A549 (cell line): ENCODE measurements at regions of chr19 and their contacts with region 1.

Region 1: GRCh38 chr19:46265217-46265828 is 31.5 kb upstream of the HIF3A start:
- DNase-seq: peak; percentile 86 to 91
- ATAC-seq: peak; percentile 89 to 95
- H3K4me3 ChIP-seq: no peak overlapping the region
- H3K27ac ChIP-seq: peak overlapping the region; percentile 14 to 70; a peak in 5 of 6 replicates
- H3K4me1 ChIP-seq: peaks cover 19% of the 10 kb centered on the region
- CTCF ChIP-seq: peak; percentile 99
- EP300 ChIP-seq: no peak
- POLR2A ChIP-seq: no peak
- RAD21 ChIP-seq: peak; percentile 99

Region 2: DNA sequence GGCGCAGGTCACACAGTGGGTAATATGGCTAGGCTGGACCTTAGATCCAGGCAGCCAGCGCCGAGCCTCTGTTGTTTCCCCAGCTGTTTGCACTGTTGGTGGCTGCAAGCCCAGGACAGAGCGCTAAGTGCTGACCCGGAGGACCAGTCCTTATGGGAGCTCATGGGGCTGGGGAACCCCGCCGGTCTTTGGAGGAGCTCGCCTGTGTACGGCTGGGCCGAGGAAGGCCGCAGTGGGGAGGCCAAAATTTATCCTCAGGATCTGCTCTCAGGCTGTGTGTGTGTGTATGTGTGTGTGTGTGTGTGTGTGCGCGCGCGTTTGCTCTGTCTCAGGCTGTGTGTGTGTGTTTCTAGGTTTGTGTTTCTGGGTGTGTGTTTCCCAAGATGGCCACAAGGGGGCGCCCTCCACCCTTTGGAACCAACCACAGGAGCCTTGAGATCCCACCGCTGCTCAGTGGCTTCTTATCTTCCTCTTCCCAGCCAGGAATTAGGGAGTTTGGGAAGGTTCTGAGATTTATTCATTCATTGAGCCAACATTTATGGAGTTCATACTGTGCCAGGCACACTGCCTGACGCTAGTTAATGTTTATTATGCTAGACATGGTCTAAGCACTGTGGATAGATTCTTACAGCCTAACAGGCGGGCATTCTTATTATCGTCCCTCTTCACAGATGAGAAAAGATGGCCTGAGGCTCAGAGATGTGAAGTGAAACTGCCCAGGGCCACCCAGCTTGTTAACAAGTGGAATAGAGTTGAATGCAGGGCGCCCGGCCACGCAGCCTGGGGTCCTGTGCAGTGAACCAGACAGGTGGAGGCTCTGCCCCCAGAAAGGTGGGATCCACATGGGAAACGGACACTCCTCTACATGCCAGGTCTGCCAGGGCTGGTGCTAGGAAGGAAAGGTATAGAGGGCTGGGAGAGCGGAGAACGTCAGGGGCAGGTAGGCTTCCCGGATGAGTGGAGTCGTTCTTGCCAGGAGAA is 255.5 kb before region 1 on chr19:
- CTCF ChIA-PET with region 1: interaction called, 14 read pairs
- POLR2A ChIA-PET with region 1: no interaction called
- DNase-seq: peak; percentile 81
- ATAC-seq: peak; percentile 90 to 96
- H3K4me3 ChIP-seq: no peak overlapping the region
- H3K27ac ChIP-seq: no peak overlapping the region
- H3K4me1 ChIP-seq: peaks cover 7% of the 10 kb centered on the region; the same call in 1 of the 3 replicates
- CTCF ChIP-seq: peak; percentile 95
- EP300 ChIP-seq: no peak
- POLR2A ChIP-seq: no peak
- RAD21 ChIP-seq: peak; percentile 61 to 68

Region 3: DNA sequence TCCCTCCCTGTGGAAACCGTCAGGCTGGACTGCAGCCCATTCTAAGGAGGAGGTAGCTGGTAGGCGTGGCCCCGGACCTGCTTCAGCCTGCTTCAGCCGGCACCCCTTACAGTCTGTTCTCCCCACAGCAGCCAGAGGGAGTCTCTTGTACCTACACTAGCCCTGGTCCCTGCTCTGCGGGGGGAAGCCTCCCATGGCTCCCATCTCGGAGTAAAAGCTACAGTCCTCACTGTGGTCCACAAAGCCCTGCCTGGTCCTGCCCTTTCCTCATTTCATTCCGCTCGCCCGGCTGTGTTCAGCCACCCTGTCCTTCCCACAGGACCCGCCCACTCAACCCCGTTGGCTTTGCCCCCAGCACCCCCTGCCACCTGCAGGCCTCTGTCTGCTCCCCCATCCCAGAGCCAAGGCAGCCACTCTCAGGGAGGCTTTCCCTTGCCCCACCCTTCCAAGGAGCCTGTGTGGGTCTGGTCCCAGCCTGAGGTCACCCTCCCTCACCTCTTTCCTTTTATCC is 243.7 kb before region 1 on chr19:
- CTCF ChIA-PET with region 1: interaction called, 227 read pairs
- POLR2A ChIA-PET with region 1: no interaction called
- DNase-seq: peak in 1 of 2 experiments; percentile 34
- ATAC-seq: peak; percentile 11 to 28; a peak in 3 of 6 replicates
- H3K4me3 ChIP-seq: no peak overlapping the region
- H3K27ac ChIP-seq: no peak overlapping the region
- H3K4me1 ChIP-seq: peaks cover 4% of the 10 kb centered on the region; the same call in 2 of the 3 replicates
- CTCF ChIP-seq: no peak
- EP300 ChIP-seq: no peak
- POLR2A ChIP-seq: no peak
- RAD21 ChIP-seq: no peak

Region 4: GRCh38 chr19:46040952-46041500 is 224.3 kb before region 1 on chr19 and contains the start of gene IGFL4:
- CTCF ChIA-PET with region 1: interaction called, 44 read pairs
- POLR2A ChIA-PET with region 1: no interaction called
- DNase-seq: peak in 1 of 2 experiments; percentile 41
- ATAC-seq: peak; percentile 45 to 53; a peak in 4 of 6 replicates
- H3K4me3 ChIP-seq: no peak within 1 kb of the TSS
- H3K27ac ChIP-seq: peak within 1 kb of the TSS in 1 of 2 experiments; percentile 48; a peak in 3 of 6 replicates
- H3K4me1 ChIP-seq: peaks cover 14% of the 10 kb centered on the region
- CTCF ChIP-seq: no peak
- EP300 ChIP-seq: peak in 1 of 2 experiments; percentile 35; a peak in 1 of 5 replicates
- POLR2A ChIP-seq: no peak
- RAD21 ChIP-seq: no peak
- polyA plus RNA-seq, gene IGFL4: 1.7 and 2.4 TPM in 2 replicates

Region 5: GRCh38 chr19:46201413-46202310 is 63.7 kb before region 1 on chr19:
- CTCF ChIA-PET with region 1: interaction called, 13 read pairs
- POLR2A ChIA-PET with region 1: no interaction called
- DNase-seq: peak in 1 of 2 experiments; percentile 38
- ATAC-seq: 0 out of 6 replicates have a peak, but pooled peaks of 1 of the 2 experiments have one; percentile 6
- H3K4me3 ChIP-seq: peak overlapping the region; percentile 36
- H3K27ac ChIP-seq: peak overlapping the region; percentile 83 to 90
- H3K4me1 ChIP-seq: peaks cover 89% of the 10 kb centered on the region
- CTCF ChIP-seq: no peak
- EP300 ChIP-seq: no peak
- POLR2A ChIP-seq: no peak
- RAD21 ChIP-seq: no peak

Region 6: GRCh38 chr19:46218160-46218559 is 47.2 kb before region 1 on chr19:
- CTCF ChIA-PET with region 1: interaction called, 80 read pairs
- POLR2A ChIA-PET with region 1: no interaction called
- DNase-seq: peak in 1 of 2 experiments; percentile 56
- ATAC-seq: no peak
- H3K4me3 ChIP-seq: no peak overlapping the region
- H3K27ac ChIP-seq: no peak overlapping the region
- H3K4me1 ChIP-seq: peaks cover 38% of the 10 kb centered on the region
- CTCF ChIP-seq: no peak
- EP300 ChIP-seq: no peak
- POLR2A ChIP-seq: no peak
- RAD21 ChIP-seq: no peak

Region 7: GRCh38 chr19:46328079-46328478 is 62.8 kb after region 1 on chr19:
- CTCF ChIA-PET with region 1: no interaction called
- POLR2A ChIA-PET with region 1: no interaction called
- DNase-seq: no peak
- ATAC-seq: 0 out of 6 replicates have a peak, but pooled peaks of 1 of the 2 experiments have one; percentile 30
- H3K4me3 ChIP-seq: no peak overlapping the region
- H3K27ac ChIP-seq: no peak overlapping the region
- H3K4me1 ChIP-seq: no peaks in the 10 kb centered on the region
- CTCF ChIP-seq: no peak
- EP300 ChIP-seq: no peak
- POLR2A ChIP-seq: no peak
- RAD21 ChIP-seq: no peak

Region 8: GRCh38 chr19:46357846-46358583 is 92.7 kb after region 1 on chr19:
- CTCF ChIA-PET with region 1: no interaction called
- POLR2A ChIA-PET with region 1: no interaction called
- DNase-seq: no peak
- ATAC-seq: no peak
- H3K4me3 ChIP-seq: no peak overlapping the region
- H3K27ac ChIP-seq: no peak overlapping the region
- H3K4me1 ChIP-seq: peaks cover 30% of the 10 kb centered on the region
- CTCF ChIP-seq: no peak
- EP300 ChIP-seq: no peak
- POLR2A ChIP-seq: no peak
- RAD21 ChIP-seq: no peak